ENCODE measurements at regions of chr19 and their contacts with region 1.

Region 1: DNA sequence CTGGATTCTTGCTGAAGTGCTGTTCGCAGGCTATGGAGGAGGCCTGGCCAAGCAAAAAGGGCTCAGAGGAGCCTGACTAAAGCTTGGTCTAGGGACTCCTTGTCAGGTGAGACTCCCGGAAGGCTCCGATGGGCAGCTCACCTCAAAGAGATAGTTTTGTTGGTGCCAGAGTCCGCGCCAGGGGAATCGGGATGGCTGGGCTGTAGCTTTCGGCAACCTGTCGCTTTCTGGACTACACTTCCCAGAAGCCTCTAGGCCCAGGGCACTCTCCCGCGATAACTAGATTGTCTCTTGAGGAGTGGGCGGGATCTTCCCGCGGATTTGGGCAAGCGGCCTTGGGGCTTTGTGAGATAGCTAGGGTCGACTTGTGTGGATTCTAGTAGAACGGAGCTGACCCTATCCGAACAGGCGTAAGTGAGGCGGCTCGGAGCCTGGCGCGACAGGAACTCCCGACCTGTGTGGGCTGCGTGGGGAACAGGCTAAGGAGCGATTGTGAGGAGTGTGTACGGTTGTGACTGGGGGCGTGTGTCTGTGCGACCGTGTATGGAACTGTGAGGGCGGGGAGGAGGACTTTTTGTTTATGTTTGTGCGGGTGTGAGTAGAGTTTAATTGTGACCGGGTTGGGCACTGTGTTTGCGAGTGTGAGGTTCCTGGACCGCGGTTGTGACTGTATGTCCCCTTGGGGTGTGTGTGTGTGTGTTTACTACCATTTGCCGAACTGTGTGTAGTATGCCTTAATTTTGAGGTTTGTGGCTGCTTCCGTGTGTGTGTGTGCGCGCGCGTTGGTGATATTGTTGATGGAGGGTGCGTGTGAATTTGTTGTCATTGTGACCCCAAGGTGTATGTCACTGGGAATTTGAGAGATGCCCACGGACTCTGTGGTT is at the start of gene ZNF345:
- DNase-seq: peak; percentile 91
- H3K4me3 Mint-ChIP-seq: no peak within 1 kb of the TSS
- H3K27ac Mint-ChIP-seq: no peak within 1 kb of the TSS
- H3K4me1 Mint-ChIP-seq: peaks cover 2% of the 10 kb centered on the region
- H3K27me3 Mint-ChIP-seq: no peaks in the 10 kb centered on the region
- total RNA-seq, gene ZNF345: 3.0 to 3.6 TPM

Region 2: DNA sequence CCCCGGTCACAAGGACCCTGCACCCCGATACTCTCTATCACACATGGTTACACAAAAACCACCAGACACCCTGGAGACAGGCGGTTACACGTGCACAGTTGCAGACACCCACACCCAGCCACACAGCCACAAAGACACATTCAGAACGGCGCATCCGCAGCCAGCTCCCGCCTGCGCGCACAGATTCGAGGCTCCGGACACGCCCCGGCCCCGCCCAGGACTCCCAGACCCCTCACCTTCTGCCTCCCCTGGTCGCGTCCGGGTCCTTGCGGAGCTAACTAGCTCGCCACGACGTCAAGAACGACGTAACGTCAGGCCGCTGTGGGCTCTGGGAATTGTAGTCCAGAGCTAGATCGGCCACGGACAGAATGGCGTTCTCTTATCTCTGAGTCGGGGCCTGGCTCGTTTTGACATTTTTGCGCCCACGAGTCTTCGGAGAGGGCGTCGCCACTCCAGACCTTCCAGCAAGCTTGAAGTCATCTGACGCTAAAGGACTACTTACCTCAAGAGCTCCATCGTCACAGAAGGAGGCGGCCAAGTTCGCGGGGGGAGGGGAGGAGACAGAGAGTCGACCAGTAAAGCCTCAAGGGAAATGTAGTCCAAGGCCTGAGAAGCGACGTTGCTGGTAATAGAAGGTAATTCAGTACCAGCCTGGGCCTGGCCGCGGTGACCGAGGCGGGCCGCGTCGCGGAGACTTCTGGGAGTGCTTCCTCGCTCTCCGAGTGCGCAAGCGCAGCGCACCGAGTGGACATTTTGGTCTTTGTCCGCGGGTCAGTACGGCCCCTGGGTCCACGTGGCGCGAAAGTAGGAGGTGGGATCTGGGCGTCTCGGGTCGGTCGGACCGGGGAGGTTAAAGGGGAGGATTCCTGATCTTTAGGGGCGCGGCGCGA is 636.2 kb before region 1 on chr19 and contains the starts of genes ZNF146 and ZNF565:
- CTCF ChIA-PET with region 1: no interaction called
- intact Hi-C with region 1: loop called (anchors 1 kb)
- DNase-seq: peak; percentile 98
- H3K4me3 Mint-ChIP-seq: no peak within 1 kb of the TSS
- H3K27ac Mint-ChIP-seq: no peak within 1 kb of the TSS
- H3K4me1 Mint-ChIP-seq: peaks cover 27% of the 10 kb centered on the region
- H3K27me3 Mint-ChIP-seq: no peaks in the 10 kb centered on the region
- total RNA-seq, gene ZNF146: 78.2 to 79.2 TPM
- total RNA-seq, gene ZNF565: 2.0 to 2.2 TPM

Region 3: DNA sequence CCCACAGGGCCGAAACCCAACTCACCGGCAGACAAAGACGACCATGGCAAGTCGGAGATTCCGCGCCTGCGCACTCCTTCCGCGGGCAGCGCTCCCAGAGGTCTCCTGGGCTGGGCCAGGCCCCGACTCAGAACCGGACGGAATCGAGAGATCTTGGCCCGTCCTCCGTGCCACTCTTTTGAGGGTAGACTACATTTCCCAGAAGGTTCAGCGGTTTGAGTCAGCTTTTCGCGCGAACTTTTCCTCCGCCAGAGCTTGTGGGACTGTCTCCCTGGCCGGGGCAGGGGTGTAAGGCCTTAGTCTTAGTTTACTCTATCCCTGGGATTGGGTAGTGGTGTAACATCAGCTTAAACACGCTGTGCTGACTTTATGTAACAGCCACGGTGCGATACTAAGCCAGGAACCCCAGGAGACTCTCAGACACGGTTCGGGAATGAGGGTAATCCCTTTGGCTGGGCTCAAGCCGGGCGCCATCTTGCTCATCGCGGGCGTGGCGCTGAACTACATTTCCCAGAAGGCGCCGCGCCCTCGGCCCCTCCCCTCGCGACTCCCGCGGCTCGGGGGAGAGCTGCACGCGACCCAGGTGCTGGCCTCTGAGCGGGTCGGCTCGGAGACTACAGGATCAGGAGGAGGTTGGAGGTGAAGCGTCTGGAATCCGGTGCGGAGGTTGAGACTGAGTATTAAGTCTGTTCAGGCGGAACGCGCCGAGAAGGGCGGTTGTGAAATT is 322.4 kb before region 1 on chr19 and contains the start of gene ZNF260:
- CTCF ChIA-PET with region 1: no interaction called
- intact Hi-C with region 1: loop called (anchors 2 kb)
- DNase-seq: peak; percentile 96
- H3K4me3 Mint-ChIP-seq: peak within 1 kb of the TSS; percentile 100
- H3K27ac Mint-ChIP-seq: peak within 1 kb of the TSS; percentile 98
- H3K4me1 Mint-ChIP-seq: peaks cover 16% of the 10 kb centered on the region
- H3K27me3 Mint-ChIP-seq: no peaks in the 10 kb centered on the region
- total RNA-seq, gene ZNF260: 3.7 to 5.4 TPM

Region 4: GRCh38 chr19:36687214-36688056 is 163.4 kb before region 1 on chr19 and contains the start of gene ZNF567:
- CTCF ChIA-PET with region 1: no interaction called
- intact Hi-C with region 1: loop called (anchors 2 kb)
- DNase-seq: peak; percentile 98
- H3K4me3 Mint-ChIP-seq: peak within 1 kb of the TSS; percentile 88
- H3K27ac Mint-ChIP-seq: peak within 1 kb of the TSS; percentile 90
- H3K4me1 Mint-ChIP-seq: peaks cover 26% of the 10 kb centered on the region
- H3K27me3 Mint-ChIP-seq: no peaks in the 10 kb centered on the region
- total RNA-seq, gene ZNF567: 6.0 to 6.8 TPM

Region 5: GRCh38 chr19:36837906-36838783 is 12.7 kb before region 1 on chr19 and contains the start of gene ZNF790:
- CTCF ChIA-PET with region 1: interaction called, 3 read pairs
- intact Hi-C with region 1: loop called (anchors 1 kb)
- DNase-seq: peak; percentile 92
- H3K4me3 Mint-ChIP-seq: no peak within 1 kb of the TSS
- H3K27ac Mint-ChIP-seq: peak within 1 kb of the TSS; percentile 54
- H3K4me1 Mint-ChIP-seq: peaks cover 7% of the 10 kb centered on the region
- H3K27me3 Mint-ChIP-seq: no peaks in the 10 kb centered on the region
- total RNA-seq, gene ZNF790: 4.9 to 5.2 TPM

Region 6: DNA sequence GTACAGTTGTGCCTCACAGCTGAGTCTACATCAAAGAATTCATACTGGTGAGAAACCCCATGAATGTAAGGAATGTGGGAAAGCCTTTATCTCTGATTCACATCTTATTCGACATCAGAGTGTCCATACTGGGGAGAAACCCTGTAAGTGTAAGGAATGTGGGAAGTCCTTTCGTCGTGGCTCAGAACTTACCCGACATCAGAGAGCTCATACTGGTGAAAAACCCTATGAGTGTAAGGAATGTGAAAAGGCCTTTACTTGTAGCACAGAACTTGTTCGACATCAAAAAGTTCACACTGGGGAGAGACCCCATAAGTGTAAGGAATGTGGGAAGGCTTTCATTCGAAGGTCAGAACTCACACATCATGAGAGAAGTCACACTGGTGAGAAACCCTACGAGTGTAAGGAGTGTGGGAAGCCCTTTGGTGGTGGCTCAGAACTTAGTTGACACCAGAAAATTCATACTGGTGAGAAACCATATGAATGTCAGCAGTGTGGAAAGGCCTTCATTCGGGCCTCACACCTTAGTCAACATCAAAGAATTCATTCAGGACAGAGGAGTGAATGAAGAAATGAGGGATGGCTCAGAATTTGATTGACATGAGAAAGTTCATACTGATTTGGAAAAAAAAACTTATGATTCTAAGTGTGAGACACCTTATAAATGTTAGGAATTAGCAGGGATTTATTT is 146.5 kb after region 1 on chr19:
- CTCF ChIA-PET with region 1: no interaction called
- intact Hi-C with region 1: no loop called
- DNase-seq: no peak
- H3K4me3 Mint-ChIP-seq: no peak overlapping the region
- H3K27ac Mint-ChIP-seq: no peak overlapping the region
- H3K4me1 Mint-ChIP-seq: no peaks in the 10 kb centered on the region
- H3K27me3 Mint-ChIP-seq: no peaks in the 10 kb centered on the region

Region 7: GRCh38 chr19:37172368-37173366 is 321.9 kb after region 1 on chr19 and contains the start of gene ZNF585A:
- CTCF ChIA-PET with region 1: no interaction called
- intact Hi-C with region 1: loop called (anchors 1 kb)
- DNase-seq: peak; percentile 92
- H3K4me3 Mint-ChIP-seq: no peak within 1 kb of the TSS
- H3K27ac Mint-ChIP-seq: no peak within 1 kb of the TSS
- H3K4me1 Mint-ChIP-seq: no peaks in the 10 kb centered on the region
- H3K27me3 Mint-ChIP-seq: no peaks in the 10 kb centered on the region
- total RNA-seq, gene ZNF585A: 8.9 to 9.1 TPM

Region 8: DNA sequence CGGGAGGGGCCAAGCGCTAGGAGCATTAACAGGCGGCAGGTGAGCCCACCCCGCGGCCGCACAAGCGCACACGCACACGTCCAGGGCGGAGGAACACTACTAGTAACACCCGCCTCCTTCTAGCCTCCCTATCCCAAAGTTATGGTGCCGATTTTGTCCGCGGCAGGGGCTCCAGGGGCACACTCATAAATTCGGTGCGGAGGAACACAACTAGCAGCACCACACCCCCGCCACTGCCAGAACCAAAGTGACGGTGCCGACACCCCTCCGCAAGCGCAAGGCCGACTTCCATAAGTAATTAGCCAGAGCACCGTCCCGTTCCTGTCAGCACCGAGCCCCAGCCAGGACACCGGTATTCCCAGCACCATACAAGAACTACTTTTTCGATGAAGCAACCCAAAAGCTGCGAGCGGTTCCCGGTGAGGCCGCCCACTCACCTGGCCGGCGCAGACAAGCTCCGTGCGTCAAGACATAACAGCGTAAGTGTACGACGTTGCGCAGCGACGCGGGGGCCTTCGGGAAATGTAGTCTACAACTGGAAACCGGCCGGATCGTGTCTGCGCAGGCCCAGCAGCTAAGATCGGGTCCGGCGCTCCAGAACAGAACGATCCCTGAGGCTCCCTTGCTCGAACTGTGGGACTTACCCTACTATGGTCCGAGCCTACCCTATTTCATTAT is 743.6 kb after region 1 on chr19 and contains the starts of genes ZNF540 and ZNF571:
- CTCF ChIA-PET with region 1: no interaction called
- intact Hi-C with region 1: loop called (anchors 1 kb)
- DNase-seq: peak; percentile 96
- H3K4me3 Mint-ChIP-seq: peak within 1 kb of the TSS; percentile 99
- H3K27ac Mint-ChIP-seq: peak within 1 kb of the TSS; percentile 97
- H3K4me1 Mint-ChIP-seq: peaks cover 17% of the 10 kb centered on the region
- H3K27me3 Mint-ChIP-seq: no peaks in the 10 kb centered on the region
- total RNA-seq, gene ZNF540: 1.0 to 1.9 TPM
- total RNA-seq, gene ZNF571: 2.8 to 3.5 TPM

Measured in activated naive CD4-positive, alpha-beta T cell treated with anti-CD3 and anti-CD28 coated beads for 36 hours (primary cell).